ENCODE measurements at regions of chr5 and their contacts with region 1.

Region 1: GRCh38 chr5:134586866-134587524 is 45.6 kb downstream of the SAR1B start:
- DNase-seq: peak; percentile 87
- H3K4me3 ChIP-seq: peak overlapping the region in 2 of 4 donors; percentile 9 to 19
- H3K27ac ChIP-seq: peak overlapping the region in 2 of 4 donors; percentile 28 to 35
- H3K4me1 ChIP-seq: peaks cover 0 to 9% (median 8%) of the 10 kb centered on the region in 4 donors
- H3K27me3 ChIP-seq: no peaks in the 10 kb centered on the region
- CTCF ChIP-seq: peak; percentile 33 to 87 (median 70)
- EP300 ChIP-seq: no peak
- POLR2A ChIP-seq: no peak

Region 2: GRCh38 chr5:134176511-134177368 is 410.3 kb before region 1 on chr5 and contains the start of gene SKP1:
- intact Hi-C with region 1: loop called (anchors 2 kb)
- DNase-seq: peak; percentile 89
- H3K4me3 ChIP-seq: peak within 1 kb of the TSS; percentile 82 to 99 (median 92)
- H3K27ac ChIP-seq: peak within 1 kb of the TSS; percentile 97 to 100 (median 98)
- H3K4me1 ChIP-seq: peaks cover 0 to 43% (median 38%) of the 10 kb centered on the region in 4 donors
- H3K27me3 ChIP-seq: no peaks in the 10 kb centered on the region
- CTCF ChIP-seq: no peak
- EP300 ChIP-seq: no peak
- POLR2A ChIP-seq: peak; percentile 95 to 98
- total RNA-seq, gene SKP1: 193 to 320 (median 271) TPM

Region 3: GRCh38 chr5:134304311-134304710 is 282.7 kb before region 1 on chr5:
- intact Hi-C with region 1: loop called (anchors 1 kb)
- DNase-seq: no peak
- H3K4me3 ChIP-seq: no peak overlapping the region
- H3K27ac ChIP-seq: no peak overlapping the region
- H3K4me1 ChIP-seq: no peaks in the 10 kb centered on the region
- H3K27me3 ChIP-seq: no peaks in the 10 kb centered on the region
- CTCF ChIP-seq: no peak
- EP300 ChIP-seq: no peak
- POLR2A ChIP-seq: no peak

Region 4: GRCh38 chr5:134626369-134627014 is 39.5 kb after region 1 on chr5:
- intact Hi-C with region 1: no loop called
- DNase-seq: no peak
- H3K4me3 ChIP-seq: no peak overlapping the region
- H3K27ac ChIP-seq: no peak overlapping the region
- H3K4me1 ChIP-seq: peaks cover 0 to 7% (median 5%) of the 10 kb centered on the region in 4 donors
- H3K27me3 ChIP-seq: no peaks in the 10 kb centered on the region
- CTCF ChIP-seq: no peak
- EP300 ChIP-seq: no peak
- POLR2A ChIP-seq: no peak

Measured in sigmoid colon (tissue), 7 donors.